ENCODE measurements at regions of chr12 and their contacts with region 1.

Region 1: DNA sequence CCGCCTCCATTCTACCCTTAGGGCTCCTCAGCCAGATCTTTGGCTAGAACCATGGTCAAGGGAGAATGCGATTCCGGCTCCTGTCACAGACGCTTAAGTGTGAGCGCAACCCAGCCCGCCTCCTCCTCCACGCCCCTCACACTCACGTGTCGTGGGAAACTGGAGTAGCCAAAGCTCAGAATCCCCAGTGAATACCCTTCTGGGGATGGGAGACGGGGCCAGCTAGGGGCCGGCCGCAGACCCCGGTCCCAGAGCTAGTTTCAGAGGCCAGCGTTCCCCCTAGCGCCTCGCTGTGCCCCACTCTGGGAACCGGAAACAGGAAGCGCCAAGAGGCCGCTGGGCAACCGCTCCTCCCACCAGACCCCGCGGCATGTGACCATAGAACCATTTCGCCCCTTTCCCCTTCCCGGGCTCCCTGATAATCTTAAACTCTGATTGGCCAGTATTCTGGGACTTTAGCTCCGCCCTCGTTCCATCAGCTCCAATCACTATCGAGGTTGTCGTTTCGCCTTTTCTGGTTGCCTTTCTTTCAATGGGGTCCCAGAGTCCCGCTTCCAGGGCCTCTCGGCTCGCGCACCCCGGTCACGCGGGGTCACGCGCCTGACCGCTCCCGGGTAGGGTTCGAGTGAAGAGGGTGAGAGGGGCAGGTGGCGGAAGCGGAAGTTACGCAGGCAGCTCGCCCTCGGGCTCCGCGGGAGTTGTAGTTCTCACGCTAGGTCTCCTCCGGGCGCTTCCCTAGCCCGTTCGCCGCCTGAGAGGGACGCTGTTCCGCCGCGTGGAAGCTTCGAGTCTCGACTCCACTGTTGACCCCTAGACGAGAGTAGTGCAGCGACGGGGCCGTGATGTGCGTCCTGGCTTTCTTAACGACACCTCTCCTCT is at the start of gene M6PR:
- DNase-seq: peak; percentile 91 to 99 (median 97)

Region 2: GRCh38 chr12:8914716-8915526 is 34.7 kb before region 1 on chr12:
- intact Hi-C with region 1: loop called (anchors 2 kb)
- DNase-seq: peak in 39 of 42 donors; percentile 12 to 65 (median 39)

Region 3: GRCh38 chr12:9027161-9028059 is 77.8 kb after region 1 on chr12:
- intact Hi-C with region 1: no loop called
- DNase-seq: no peak

Measured in head of caudate nucleus (tissue), 42 donors.